ENCODE measurements at regions of chr6 and their contacts with region 1.

Region 1: DNA sequence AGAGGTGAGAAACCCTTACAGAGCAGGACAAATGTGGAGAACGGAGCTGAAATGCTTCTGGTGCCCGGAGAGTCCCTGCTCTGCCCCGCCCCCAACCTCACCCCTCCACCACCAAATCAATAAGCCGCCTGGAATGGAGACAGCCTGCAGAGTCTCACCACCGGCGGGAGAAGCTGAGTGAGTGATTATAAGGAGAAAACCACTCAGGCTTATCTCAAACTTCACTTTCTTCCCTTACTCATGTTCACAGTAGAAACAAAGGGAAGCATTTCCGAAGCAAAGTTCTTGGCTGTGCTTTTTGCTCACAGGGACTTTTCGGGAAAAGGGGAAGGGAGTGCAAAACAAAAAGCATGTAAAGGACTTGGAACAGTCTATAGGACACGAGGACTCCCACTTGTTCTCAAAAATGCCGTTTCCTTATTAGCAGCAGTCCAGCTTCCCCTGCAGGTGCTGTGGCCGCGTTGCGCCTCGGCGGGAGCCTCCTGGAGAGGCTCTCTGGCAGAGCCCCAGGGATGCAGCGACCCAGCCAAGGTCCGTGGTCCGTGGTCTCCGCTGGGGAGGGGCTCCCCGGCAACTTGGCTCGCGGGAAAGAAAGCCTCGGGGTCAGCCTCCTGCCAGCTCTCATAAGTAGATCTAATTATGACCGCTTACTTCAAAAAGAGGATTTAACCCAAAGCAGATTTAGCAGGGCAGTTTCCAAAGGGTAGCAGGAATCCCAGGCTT is 64.8 kb upstream of the TMEM30A start:
- DNase-seq: no peak
- H3K4me3 ChIP-seq: peak overlapping the region; percentile 22 to 57
- H3K27ac ChIP-seq: peak overlapping the region; percentile 55 to 74
- H3K4me1 ChIP-seq: peaks cover 0 to 16% of the 10 kb centered on the region in 2 donors
- H3K27me3 ChIP-seq: no peaks in the 10 kb centered on the region
- CTCF ChIP-seq: peak in 1 of 3 experiments; percentile 25

Region 2: DNA sequence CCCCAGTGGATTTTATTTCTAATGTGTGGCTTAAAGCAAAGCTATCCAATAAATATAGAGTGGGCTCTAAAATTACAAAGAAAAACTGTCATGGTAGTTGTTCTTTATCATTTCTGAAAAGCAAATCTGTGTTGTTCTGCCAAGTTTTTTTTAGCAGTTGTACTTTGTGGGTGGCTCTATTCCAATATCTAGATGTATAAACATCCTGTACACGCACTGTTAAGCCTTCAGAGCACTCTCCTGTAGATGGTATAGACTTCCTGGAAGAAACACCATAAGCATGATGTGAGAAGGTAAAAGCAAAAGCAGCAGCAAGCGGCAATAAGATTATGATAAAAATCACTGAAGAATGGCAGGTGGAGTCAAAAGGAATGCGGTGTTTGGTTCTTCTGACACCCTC is 43.4 kb before region 1 on chr6:
- intact Hi-C with region 1: loop called (anchors 5 kb)
- DNase-seq: no peak
- H3K4me3 ChIP-seq: no peak overlapping the region
- H3K27ac ChIP-seq: no peak overlapping the region
- H3K4me1 ChIP-seq: no peaks in the 10 kb centered on the region
- H3K27me3 ChIP-seq: no peaks in the 10 kb centered on the region
- CTCF ChIP-seq: no peak

Region 3: DNA sequence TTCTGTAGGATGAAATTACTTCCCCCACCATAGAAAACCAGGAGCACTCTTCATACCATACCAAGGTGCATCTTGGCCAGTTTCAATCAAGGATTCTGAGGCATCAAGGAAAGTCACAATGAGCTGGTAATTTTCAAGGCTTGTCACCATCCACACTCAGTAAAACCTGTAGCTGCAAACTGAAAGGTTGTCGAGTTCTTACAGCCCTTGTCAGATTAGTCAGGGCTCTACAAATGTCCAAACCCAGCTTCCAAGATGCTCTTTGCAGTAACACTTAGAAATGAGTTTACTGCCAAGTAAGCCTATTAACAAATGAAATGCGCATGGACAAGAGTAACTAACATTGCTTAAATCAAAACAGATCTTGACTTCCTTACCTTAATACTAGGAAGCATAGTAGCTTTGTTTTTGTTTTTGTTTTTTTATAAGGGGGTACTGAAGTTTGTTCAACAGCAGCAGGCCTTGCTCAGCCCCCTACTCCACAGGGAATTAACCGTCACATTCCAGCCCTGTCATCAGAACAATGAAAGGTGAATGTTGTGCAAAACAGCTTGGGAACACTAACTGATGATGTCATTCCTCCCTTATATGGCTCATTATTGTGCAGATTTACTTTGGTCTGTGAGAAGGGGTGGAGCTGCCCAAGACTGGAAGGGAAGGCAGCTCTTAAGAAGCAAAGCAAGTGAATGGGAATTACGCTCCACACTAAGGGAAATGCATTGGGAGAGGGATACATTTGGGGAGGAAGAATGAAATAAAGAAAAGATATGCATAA is 15.0 kb before region 1 on chr6:
- intact Hi-C with region 1: loop called (anchors 2 kb)
- DNase-seq: no peak
- H3K4me3 ChIP-seq: peak overlapping the region; percentile 6 to 16
- H3K27ac ChIP-seq: peak overlapping the region; percentile 50 to 68
- H3K4me1 ChIP-seq: peaks cover 0 to 17% of the 10 kb centered on the region in 2 donors
- H3K27me3 ChIP-seq: no peaks in the 10 kb centered on the region
- CTCF ChIP-seq: no peak

Measured in ascending aorta (tissue), 2 donors.